HepG2 (cell line): ENCODE measurements at regions of chr2 and their contacts with region 1.

Region 1: GRCh38 chr2:124646166-124646815 is 621.2 kb downstream of the CNTNAP5 start:
- DNase-seq: no peak
- ATAC-seq: no peak
- H3K4me3 ChIP-seq: no peak overlapping the region
- H3K27ac ChIP-seq: no peak overlapping the region
- H3K4me1 ChIP-seq: peaks cover 11% of the 10 kb centered on the region
- H3K27me3 ChIP-seq: no peaks in the 10 kb centered on the region; a peak in 2 of 5 replicates
- CTCF ChIP-seq: no peak
- EP300 ChIP-seq: no peak
- POLR2A ChIP-seq: no peak
- RAD21 ChIP-seq: no peak

Region 2: GRCh38 chr2:124542932-124543640 is 103.2 kb before region 1 on chr2:
- CTCF ChIA-PET with region 1: no interaction called
- POLR2A ChIA-PET with region 1: no interaction called
- in situ Hi-C with region 1: no loop called
- intact Hi-C with region 1: no loop called
- DNase-seq: no peak
- ATAC-seq: no peak
- H3K4me3 ChIP-seq: no peak overlapping the region
- H3K27ac ChIP-seq: no peak overlapping the region
- H3K4me1 ChIP-seq: no peaks in the 10 kb centered on the region
- H3K27me3 ChIP-seq: peaks cover 0 to 5% of the 10 kb centered on the region in 2 experiments; a peak in 1 of 5 replicates
- CTCF ChIP-seq: no peak
- EP300 ChIP-seq: no peak
- POLR2A ChIP-seq: no peak
- RAD21 ChIP-seq: no peak

Region 3: DNA sequence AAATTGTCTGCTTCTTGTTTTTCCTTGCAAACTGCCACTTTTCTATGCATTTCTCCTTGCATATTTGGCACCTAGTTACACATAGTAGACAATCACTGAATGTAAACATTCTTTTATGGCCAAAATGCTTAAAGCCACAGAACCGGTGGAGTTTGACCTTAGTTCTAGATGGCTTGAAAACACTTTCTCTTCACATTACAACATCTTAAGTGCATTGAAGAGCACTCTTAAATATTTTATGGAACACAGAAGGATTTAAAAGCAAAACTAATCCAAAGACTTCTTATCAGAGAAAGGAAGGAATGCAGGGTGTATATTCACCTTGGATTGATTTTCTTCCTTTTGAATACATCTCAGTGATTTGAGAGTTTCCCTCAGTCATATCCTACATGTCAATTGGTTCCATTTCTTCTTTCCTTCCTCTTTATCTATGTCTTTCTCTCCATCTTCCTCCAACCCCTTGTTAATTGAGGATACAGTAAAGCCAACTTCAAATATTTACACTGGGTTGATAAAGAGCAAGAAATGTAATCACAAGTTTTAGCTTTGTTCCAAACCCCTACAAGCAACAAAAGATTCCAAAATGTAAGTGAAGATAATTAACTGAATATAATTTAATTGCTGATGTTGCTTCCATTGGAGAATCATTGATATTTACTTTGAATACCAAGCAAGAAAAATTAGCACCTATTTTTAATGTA is 73.2 kb before region 1 on chr2:
- CTCF ChIA-PET with region 1: no interaction called
- POLR2A ChIA-PET with region 1: no interaction called
- in situ Hi-C with region 1: no loop called
- intact Hi-C with region 1: loop called (anchors 5 kb)
- DNase-seq: no peak
- ATAC-seq: no peak
- H3K4me3 ChIP-seq: no peak overlapping the region
- H3K27ac ChIP-seq: no peak overlapping the region
- H3K4me1 ChIP-seq: peaks cover 62% of the 10 kb centered on the region
- H3K27me3 ChIP-seq: no peaks in the 10 kb centered on the region
- CTCF ChIP-seq: no peak
- EP300 ChIP-seq: peak in 1 of 2 experiments; percentile 11; a peak in 1 of 4 replicates
- POLR2A ChIP-seq: no peak
- RAD21 ChIP-seq: no peak

Region 4: GRCh38 chr2:124755386-124755785 is 109.1 kb after region 1 on chr2:
- CTCF ChIA-PET with region 1: no interaction called
- POLR2A ChIA-PET with region 1: no interaction called
- in situ Hi-C with region 1: no loop called
- intact Hi-C with region 1: no loop called
- DNase-seq: no peak
- ATAC-seq: no peak
- H3K4me3 ChIP-seq: no peak overlapping the region
- H3K27ac ChIP-seq: no peak overlapping the region
- H3K4me1 ChIP-seq: no peaks in the 10 kb centered on the region
- H3K27me3 ChIP-seq: no peaks in the 10 kb centered on the region
- CTCF ChIP-seq: no peak
- EP300 ChIP-seq: no peak
- POLR2A ChIP-seq: no peak
- RAD21 ChIP-seq: no peak